ENCODE measurements at regions of chr21 and their contacts with region 1.

Region 1: GRCh38 chr21:41879190-41879998 is at the start of gene PRDM15:
- DNase-seq: peak in 1 of 2 experiments; percentile 88
- H3K4me3 ChIP-seq: peak within 1 kb of the TSS; percentile 69 to 92 (median 78)
- H3K27ac ChIP-seq: no peak within 1 kb of the TSS; the same call in 1 of the 2 replicates
- H3K4me1 ChIP-seq: peaks cover 0 to 6% (median 0%) of the 10 kb centered on the region in 4 experiments; a peak in 3 of 7 replicates
- H3K27me3 ChIP-seq: no peaks in the 10 kb centered on the region
- CTCF ChIP-seq: no peak
- EP300 ChIP-seq: no peak
- POLR2A ChIP-seq: 0 out of 3 replicates have a peak, but pooled peaks of 1 of the 2 experiments have one; percentile 45
- RAD21 ChIP-seq: no peak
- total RNA-seq, gene PRDM15: 10.5 TPM in 2 replicates

Region 2: DNA sequence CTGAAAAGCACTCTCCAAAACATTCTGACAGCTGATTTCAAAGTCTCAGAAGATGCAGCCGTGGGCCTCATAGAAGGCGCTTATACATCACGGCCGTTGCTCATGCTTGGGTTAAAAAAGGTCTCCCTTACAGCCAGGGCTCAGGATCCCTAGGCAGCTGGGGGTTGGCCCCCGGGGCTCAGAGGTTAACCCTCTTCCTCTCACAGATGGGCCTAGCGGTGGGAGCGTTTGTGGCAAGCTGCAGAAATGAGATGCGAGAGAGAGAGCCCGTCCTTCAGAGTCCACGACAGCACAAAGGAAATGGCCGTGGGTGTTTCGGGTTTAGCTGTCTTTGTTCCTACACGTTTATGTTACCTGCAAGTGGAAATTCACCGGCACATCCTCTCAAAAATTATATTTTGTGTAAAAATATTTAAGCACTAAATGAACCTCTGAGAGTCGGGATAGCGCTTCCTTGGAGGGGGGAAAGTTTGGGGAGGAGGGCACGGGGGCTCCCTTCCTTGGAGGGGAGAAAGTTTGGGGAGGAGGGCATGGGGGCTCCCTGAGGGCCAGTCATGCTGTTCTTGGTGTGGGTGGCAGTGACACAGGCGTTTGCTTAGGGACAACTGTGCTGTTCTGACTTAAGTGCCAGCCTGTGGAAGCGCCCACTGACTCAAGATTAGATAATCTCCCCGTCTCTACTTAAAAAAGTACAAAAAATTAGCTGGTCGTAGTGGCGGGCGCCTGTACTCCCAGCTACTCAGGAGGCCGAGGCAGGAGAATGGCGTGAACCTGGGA is 20.2 kb after region 1 on chr21:
- CTCF ChIA-PET with region 1: interaction called, 8 read pairs
- POLR2A ChIA-PET with region 1: interaction called, 10 read pairs
- DNase-seq: no peak
- H3K4me3 ChIP-seq: no peak overlapping the region
- H3K27ac ChIP-seq: no peak overlapping the region
- H3K4me1 ChIP-seq: peaks cover 4 to 23% (median 19%) of the 10 kb centered on the region in 4 experiments
- H3K27me3 ChIP-seq: no peaks in the 10 kb centered on the region
- CTCF ChIP-seq: no peak
- EP300 ChIP-seq: no peak
- POLR2A ChIP-seq: no peak
- RAD21 ChIP-seq: no peak

Region 3: DNA sequence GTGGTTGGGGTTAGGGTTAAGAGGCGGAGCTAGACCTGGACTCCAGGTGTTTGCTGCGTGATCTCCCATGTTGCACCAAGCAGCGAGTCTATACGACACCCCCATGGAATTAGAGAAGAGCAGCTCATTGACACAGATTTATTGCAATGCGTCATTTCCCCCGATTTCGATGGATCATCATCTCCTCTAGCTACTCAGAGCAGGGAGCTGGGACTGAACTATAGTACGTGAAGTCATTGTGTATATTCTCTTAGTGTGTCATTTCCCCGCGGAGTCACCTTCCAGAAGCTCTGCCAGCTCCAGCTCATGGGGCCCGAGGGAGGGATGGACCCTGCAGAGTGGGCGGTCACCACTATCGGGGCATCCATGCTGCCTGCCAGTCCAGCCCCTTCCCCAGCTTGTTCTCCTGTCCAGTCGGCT is 81.9 kb after region 1 on chr21:
- CTCF ChIA-PET with region 1: no interaction called
- POLR2A ChIA-PET with region 1: interaction called, 10 read pairs
- DNase-seq: no peak
- H3K4me3 ChIP-seq: no peak overlapping the region
- H3K27ac ChIP-seq: no peak overlapping the region
- H3K4me1 ChIP-seq: peaks cover 1 to 5% (median 3%) of the 10 kb centered on the region in 4 experiments; a peak in 5 of 7 replicates
- H3K27me3 ChIP-seq: no peaks in the 10 kb centered on the region
- CTCF ChIP-seq: no peak
- EP300 ChIP-seq: no peak
- POLR2A ChIP-seq: no peak
- RAD21 ChIP-seq: no peak